ENCODE measurements at regions of chr19 and their contacts with region 1.

Region 1: GRCh38 chr19:28737021-28737895 is 475.7 kb downstream of the UQCRFS1 start:
- DNase-seq: no peak
- ATAC-seq: peak; percentile 80

Region 2: DNA sequence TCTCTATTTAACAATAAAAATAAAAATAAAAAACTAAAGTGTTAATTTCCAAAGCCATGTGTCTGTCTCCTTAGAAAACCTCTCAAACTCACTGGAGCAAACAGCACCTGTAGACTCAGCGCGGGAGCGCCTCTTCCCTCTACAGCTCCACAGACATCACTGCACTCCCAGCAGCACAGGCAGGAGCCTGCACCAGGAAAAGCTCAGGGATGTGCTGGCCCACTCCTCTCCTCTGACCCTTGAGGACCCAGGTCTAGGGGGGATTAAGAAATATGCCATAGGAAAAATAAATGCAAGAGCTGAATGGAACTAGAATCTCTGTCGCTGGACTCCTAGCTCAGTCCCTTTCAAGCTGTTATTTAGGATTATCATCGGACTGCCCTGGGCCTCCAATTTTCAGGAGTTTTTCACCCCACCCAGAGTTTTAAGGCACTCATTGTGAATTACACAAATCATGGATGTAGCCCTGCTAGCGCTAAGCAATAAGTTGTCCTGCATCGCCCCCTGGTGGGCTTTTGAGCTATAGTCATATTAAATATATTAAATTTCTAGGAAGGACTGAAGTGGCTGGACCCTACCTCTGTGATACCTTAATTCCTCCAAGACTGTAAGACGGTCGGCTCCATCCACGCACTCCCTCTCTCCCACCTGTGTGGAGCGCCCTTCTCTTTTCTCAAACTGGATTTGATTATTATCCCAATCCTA is 141.8 kb after region 1 on chr19:
- intact Hi-C with region 1: loop called (anchors 2 kb)
- DNase-seq: peak; percentile 71
- ATAC-seq: peak; percentile 36

Region 3: GRCh38 chr19:29263305-29264135 is 526.3 kb after region 1 on chr19:
- intact Hi-C with region 1: loop called (anchors 5 kb)
- DNase-seq: peak; percentile 47
- ATAC-seq: peak; percentile 64